Caco-2 (cell line): ENCODE measurements at regions of chr11 and their contacts with region 1.

Region 1: DNA sequence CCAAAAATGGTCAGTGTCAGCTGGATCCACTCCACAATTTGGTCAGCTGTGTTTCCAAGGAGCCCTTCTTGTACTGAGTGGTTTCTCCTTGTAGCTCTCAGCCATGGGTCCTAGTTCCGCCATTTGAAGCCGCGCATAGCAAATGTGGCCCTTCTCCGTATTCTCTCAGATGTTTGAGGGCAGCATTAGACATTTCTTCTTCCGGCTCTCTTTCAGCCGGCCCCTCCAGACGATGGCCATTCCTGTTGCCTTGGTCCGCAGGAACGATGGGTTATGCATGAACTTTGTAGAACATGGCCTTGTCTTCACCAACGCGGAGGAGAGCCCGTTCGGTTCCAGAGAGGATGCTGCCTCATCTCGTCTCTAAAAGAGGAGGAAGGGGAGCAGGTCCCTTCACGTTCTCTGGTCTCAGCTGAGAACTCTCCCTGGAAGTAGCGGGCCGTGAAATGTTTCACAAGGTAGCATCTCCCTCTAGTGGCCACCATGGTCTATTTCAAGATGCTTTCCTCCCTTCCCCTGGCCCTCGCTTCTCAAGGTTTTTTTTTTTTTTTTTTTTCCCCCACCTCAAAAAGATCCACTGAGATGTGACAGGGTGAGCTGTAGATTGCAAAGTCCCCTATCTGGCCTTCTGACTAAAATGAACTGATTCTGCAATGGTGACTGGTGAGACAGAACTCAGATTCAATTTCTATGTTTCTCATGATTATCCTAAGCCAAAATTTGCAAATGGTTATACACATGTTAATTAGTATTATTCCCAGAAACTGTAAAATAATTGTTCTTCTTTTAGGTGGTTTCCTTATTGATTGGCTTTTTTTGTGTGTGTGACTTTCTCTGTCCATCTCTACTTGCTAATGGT is 19.8 kb upstream of the PLET1 start:
- DNase-seq: peak; percentile 89 to 90
- H3K4me3 ChIP-seq: peak overlapping the region; percentile 28
- H3K4me3 Mint-ChIP-seq: peak overlapping the region; percentile 75
- H3K27ac Mint-ChIP-seq: no peak overlapping the region
- H3K4me1 ChIP-seq: peaks cover 34% of the 10 kb centered on the region
- H3K4me1 Mint-ChIP-seq: peaks cover 34% of the 10 kb centered on the region
- H3K27me3 ChIP-seq: no peaks in the 10 kb centered on the region
- H3K27me3 Mint-ChIP-seq: peaks cover 3% of the 10 kb centered on the region
- CTCF ChIP-seq: peak; percentile 86 to 97

Region 2: DNA sequence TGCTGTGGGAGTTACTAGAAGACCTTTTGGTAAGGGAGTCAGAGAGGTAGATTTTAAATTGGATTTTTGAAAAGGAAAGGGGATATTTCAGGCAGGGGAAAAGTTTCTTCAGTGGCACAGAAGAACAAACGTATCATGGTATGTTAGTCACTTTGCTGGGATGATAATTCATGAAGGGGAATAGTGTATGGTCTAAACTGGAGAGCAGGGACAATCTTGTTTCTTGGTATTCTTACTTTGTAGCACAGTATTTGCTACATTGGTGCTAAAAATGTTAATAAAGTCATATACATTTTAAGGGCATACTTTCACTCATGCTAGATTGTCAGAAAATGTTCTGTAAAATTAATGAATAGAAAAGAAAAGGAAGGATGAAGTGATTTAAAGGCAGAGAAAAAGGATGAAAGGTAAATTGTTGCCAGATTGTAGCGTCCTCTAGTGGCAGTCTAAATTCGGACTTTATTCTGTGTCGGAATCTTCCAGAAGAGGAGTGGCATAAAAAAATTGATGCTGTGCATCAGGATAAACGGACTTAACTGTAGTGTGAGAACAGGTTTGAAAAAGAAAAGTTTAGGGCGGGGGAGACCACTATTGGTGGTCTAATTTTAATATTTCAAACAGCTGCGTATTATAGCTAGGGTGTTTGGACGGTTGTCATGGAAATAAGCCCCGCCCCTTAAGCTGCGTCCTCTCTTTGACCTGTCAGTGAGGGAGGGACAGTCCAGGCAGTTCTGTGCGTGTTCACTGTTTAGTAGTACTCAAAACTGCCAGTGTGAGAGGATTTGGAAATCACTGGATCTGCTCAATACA is 105.5 kb before region 1 on chr11 and contains the start of gene BCO2:
- CTCF ChIA-PET with region 1: interaction called, 3 read pairs
- POLR2A ChIA-PET with region 1: no interaction called
- intact Hi-C with region 1: loop called (anchors 1 kb)
- DNase-seq: peak; percentile 88 to 89
- H3K4me3 ChIP-seq: no peak within 1 kb of the TSS
- H3K4me3 Mint-ChIP-seq: peak within 1 kb of the TSS; percentile 60
- H3K27ac Mint-ChIP-seq: peak within 1 kb of the TSS; percentile 65
- H3K4me1 ChIP-seq: peaks cover 14% of the 10 kb centered on the region
- H3K4me1 Mint-ChIP-seq: peaks cover 21% of the 10 kb centered on the region
- H3K27me3 ChIP-seq: no peaks in the 10 kb centered on the region
- H3K27me3 Mint-ChIP-seq: peaks cover 12% of the 10 kb centered on the region
- CTCF ChIP-seq: peak; percentile 84 to 96
- total RNA-seq, gene BCO2: 1.3 and 2.2 TPM in 2 replicates

Region 3: DNA sequence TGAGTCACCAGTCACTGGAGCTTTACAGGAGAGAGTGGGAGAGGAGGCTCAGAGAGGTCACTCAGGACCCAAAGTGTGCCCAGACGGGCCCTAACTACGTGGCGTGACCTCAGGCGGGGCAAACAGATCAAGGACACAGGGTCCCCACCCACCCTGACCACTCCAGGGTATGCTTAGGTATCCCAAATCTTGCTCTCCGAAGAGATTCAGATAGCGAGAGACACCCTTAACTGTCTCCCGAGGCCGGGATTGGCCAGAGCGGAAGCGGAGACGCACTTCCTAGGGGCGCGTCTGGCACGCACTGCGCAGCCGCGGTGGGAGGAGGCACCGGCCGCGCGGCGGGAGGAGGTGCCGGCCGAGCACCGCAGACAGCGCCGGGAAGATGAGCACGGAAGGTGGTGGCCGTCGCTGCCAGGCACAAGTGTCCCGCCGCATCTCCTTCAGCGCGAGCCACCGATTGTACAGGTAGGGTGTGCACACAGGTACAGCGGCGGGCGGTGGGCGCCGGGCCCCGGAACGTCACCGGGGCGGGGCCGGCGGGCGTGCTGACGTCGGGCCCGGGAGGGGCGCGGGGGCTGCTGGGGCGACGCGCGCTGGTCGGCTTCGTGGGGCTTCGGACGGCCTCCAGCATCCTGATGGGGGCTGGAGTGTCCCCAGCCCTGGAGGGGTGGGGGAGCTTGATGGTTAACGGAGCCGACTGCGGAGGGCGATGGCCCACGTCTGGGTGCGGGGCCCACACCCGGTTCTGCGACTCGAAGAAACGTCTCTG is 54.3 kb before region 1 on chr11 and contains the start of gene PTS:
- CTCF ChIA-PET with region 1: interaction called, 139 read pairs
- POLR2A ChIA-PET with region 1: interaction called, 6 read pairs
- intact Hi-C with region 1: loop called (anchors 1 kb)
- DNase-seq: peak; percentile 91 to 94
- H3K4me3 ChIP-seq: peak within 1 kb of the TSS; percentile 63
- H3K4me3 Mint-ChIP-seq: peak within 1 kb of the TSS; percentile 98
- H3K27ac Mint-ChIP-seq: peak within 1 kb of the TSS; percentile 98
- H3K4me1 ChIP-seq: peaks cover 28% of the 10 kb centered on the region
- H3K4me1 Mint-ChIP-seq: peaks cover 21% of the 10 kb centered on the region
- H3K27me3 ChIP-seq: no peaks in the 10 kb centered on the region
- H3K27me3 Mint-ChIP-seq: no peaks in the 10 kb centered on the region
- CTCF ChIP-seq: no peak
- total RNA-seq, gene PTS: 78.0 and 79.5 TPM in 2 replicates

Region 4: DNA sequence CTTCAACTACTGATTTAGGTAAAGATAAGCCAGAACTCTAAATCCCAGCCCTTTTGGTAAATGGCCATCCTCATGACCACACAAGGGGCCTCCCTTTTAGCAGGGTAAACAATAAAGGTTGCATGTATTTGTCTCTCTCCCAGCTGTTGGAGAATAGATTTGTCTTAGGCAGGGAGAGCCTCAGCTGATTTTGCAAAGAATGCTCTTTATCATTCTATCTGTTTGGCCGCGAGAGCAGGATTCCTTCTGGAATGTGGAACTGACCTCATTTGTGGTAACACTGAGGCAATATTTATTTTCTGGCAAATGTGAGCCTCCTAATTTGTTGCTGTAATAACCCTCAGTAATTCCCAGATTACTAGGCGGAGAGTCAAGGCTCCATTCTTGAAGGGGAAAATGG is 39.0 kb before region 1 on chr11:
- CTCF ChIA-PET with region 1: interaction called, 8 read pairs
- POLR2A ChIA-PET with region 1: no interaction called
- intact Hi-C with region 1: loop called (anchors 1 kb)
- DNase-seq: peak; percentile 66 to 80
- H3K4me3 ChIP-seq: no peak overlapping the region
- H3K4me3 Mint-ChIP-seq: no peak overlapping the region
- H3K27ac Mint-ChIP-seq: no peak overlapping the region
- H3K4me1 ChIP-seq: peaks cover 12% of the 10 kb centered on the region
- H3K4me1 Mint-ChIP-seq: peaks cover 29% of the 10 kb centered on the region
- H3K27me3 ChIP-seq: no peaks in the 10 kb centered on the region
- H3K27me3 Mint-ChIP-seq: no peaks in the 10 kb centered on the region
- CTCF ChIP-seq: no peak

Region 5: GRCh38 chr11:113289431-113290187 is 1009.1 kb after region 1 on chr11:
- CTCF ChIA-PET with region 1: interaction called, 3 read pairs
- POLR2A ChIA-PET with region 1: no interaction called
- intact Hi-C with region 1: loop called (anchors 10 kb)
- DNase-seq: peak; percentile 70 to 82
- H3K4me3 ChIP-seq: no peak overlapping the region
- H3K4me3 Mint-ChIP-seq: no peak overlapping the region
- H3K27ac Mint-ChIP-seq: no peak overlapping the region
- H3K4me1 ChIP-seq: peaks cover 15% of the 10 kb centered on the region
- H3K4me1 Mint-ChIP-seq: peaks cover 26% of the 10 kb centered on the region
- H3K27me3 ChIP-seq: no peaks in the 10 kb centered on the region
- H3K27me3 Mint-ChIP-seq: peaks cover 2% of the 10 kb centered on the region
- CTCF ChIP-seq: peak; percentile 95 to 99

Region 6: GRCh38 chr11:113376156-113376555 is 1095.7 kb after region 1 on chr11:
- CTCF ChIA-PET with region 1: no interaction called
- POLR2A ChIA-PET with region 1: no interaction called
- intact Hi-C with region 1: no loop called
- DNase-seq: no peak
- H3K4me3 ChIP-seq: no peak overlapping the region
- H3K4me3 Mint-ChIP-seq: no peak overlapping the region
- H3K27ac Mint-ChIP-seq: no peak overlapping the region
- H3K4me1 ChIP-seq: no peaks in the 10 kb centered on the region
- H3K4me1 Mint-ChIP-seq: no peaks in the 10 kb centered on the region
- H3K27me3 ChIP-seq: no peaks in the 10 kb centered on the region
- H3K27me3 Mint-ChIP-seq: no peaks in the 10 kb centered on the region
- CTCF ChIP-seq: no peak